ENCODE measurements at regions of chr19 and their contacts with region 1.

Region 1: DNA sequence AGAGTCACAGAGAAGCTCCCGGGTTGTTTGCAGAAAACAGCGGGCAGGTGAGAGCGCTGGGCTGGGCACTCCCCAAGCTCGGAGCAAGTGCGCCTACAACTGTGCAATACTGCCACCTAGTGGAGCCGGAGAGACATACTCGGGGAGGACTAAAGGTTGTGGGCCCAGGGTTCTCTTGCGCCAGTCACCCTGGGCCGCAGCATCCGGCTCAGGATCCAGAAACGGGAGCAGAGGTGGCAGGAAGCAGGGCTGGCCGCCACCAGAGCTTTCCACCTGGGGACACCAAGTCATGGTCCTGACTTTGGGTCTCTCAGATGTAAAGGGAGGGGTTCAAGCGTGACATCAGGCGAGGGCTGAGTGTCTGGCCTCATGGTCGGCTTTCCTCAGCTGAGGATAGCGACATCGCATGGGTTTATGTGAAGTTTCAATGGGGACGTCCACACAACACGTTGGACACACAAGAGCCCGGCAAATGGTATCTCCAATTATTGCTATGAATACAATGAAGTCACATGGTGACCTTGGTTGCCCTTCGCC is 11.2 kb upstream of the KLK4 start:
- DNase-seq: peak in 1 of 2 donors; percentile 38
- H3K4me3 ChIP-seq: no peak overlapping the region
- CTCF ChIP-seq: no peak
- POLR2A ChIP-seq: no peak

Region 2: DNA sequence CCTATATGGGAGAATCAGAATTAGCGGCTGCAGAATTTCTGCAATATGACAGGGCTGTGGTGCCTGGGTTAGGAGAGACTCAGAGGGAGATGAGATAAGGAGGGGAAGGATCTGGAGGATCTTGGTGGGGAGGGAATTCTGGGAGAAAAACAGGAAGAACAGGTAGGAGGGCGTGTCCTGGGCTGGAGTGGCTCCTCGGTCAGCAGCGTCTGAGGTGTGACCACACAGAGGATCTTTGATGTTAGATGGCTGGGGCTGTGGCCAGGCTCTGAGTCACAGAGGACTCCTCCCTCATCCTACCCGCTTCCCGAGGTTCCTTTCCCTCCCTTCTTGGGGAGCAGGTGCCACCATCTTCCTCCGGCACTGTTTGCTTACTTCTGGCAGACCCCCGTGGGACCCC is 53.4 kb after region 1 on chr19:
- intact Hi-C with region 1: no loop called
- DNase-seq: no peak
- H3K4me3 ChIP-seq: no peak overlapping the region
- CTCF ChIP-seq: no peak
- POLR2A ChIP-seq: no peak

Region 3: GRCh38 chr19:51103926-51104341 is 181.5 kb after region 1 on chr19:
- intact Hi-C with region 1: loop called (anchors 2 kb)
- DNase-seq: no peak
- H3K4me3 ChIP-seq: no peak overlapping the region
- CTCF ChIP-seq: no peak
- POLR2A ChIP-seq: no peak

Measured in lower leg skin (tissue), 4 donors.